HepG2 (cell line): ENCODE measurements at regions of chr19 and their contacts with region 1.

Region 1: DNA sequence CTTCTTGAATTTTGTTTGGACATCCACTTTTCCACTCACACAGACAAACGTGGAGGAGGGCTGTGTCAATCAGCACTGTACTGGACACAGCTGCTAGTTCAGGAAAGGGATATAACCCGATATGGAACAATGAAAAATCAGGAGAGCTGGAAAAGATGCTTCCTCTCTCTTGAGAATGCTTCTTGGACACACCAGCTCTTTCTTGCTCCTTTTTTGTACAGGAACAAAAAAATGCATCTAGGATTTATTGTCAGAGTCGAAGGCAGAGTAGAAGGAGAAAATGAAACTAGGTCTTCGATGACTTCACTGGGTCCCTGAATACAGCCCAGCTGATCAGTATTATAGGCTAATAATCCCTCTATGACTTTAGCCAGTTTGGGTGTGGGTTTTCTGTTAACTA is 62.2 kb downstream of the PEG3 start:
- DNase-seq: no peak
- ATAC-seq: no peak
- H3K4me3 ChIP-seq: no peak overlapping the region
- H3K27ac ChIP-seq: no peak overlapping the region
- H3K4me1 ChIP-seq: no peaks in the 10 kb centered on the region
- H3K27me3 ChIP-seq: no peaks in the 10 kb centered on the region
- CTCF ChIP-seq: no peak
- EP300 ChIP-seq: no peak
- POLR2A ChIP-seq: no peak
- RAD21 ChIP-seq: no peak

Region 2: DNA sequence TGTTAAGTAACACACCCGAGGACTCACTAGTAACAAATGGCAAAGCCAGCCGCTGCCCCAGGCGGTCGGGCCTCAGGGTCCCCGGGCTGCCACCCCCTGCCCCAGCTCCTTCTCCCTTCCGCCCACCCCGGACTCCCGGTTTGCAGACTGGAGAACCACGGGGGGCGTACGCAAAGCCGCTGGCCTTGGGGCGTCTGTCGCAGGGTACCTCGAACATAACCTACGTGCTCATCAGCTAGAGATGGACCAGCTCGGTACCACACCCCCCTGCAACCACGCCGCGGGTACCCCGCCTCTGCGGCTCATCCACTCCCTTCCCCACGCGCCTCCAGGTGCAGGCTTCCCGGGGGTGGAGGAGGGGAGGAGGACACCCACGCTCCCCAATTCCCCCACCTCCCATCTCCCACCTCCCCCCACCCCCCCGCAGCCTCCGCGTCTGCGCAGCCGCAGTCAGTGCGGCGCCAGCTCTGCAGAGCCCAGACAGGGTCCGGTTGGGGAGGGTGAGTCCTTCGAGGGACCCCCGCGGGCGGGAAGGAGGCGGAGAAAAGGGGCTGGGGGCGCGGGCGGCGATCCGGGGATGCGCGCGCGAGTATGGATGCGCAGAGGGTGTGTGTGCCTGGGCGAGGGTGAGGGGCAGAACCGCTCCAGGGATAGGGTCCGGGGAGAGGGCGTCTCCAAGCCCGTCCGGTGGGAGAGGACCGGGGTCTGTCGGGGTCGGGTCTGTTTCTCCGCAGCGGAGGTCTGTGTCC is 135.5 kb before region 1 on chr19 and contains the start of gene SMIM17:
- CTCF ChIA-PET with region 1: no interaction called
- POLR2A ChIA-PET with region 1: no interaction called
- in situ Hi-C with region 1: no loop called
- intact Hi-C with region 1: loop called (anchors 5 kb)
- DNase-seq: no peak
- ATAC-seq: no peak
- H3K4me3 ChIP-seq: no peak within 1 kb of the TSS
- H3K27ac ChIP-seq: no peak within 1 kb of the TSS
- H3K4me1 ChIP-seq: no peaks in the 10 kb centered on the region
- H3K27me3 ChIP-seq: no peaks in the 10 kb centered on the region
- CTCF ChIP-seq: no peak
- EP300 ChIP-seq: no peak
- POLR2A ChIP-seq: no peak
- RAD21 ChIP-seq: no peak
- total RNA-seq, gene SMIM17: 0.49 and 0.53 TPM in 2 replicates